BJ (cell line): ENCODE measurements at regions of chr4 and their contacts with region 1.

Region 1: GRCh38 chr4:3346146-3346545 is 53.3 kb downstream of the RGS12 start:
- DNase-seq: peak; percentile 35
- H3K4me3 ChIP-seq: no peak overlapping the region
- H3K27me3 ChIP-seq: no peaks in the 10 kb centered on the region
- CTCF ChIP-seq: peak; percentile 86

Region 2: GRCh38 chr4:3369781-3370674 is 23.9 kb after region 1 on chr4:
- CTCF ChIA-PET with region 1: interaction called, 10 read pairs
- POLR2A ChIA-PET with region 1: no interaction called
- DNase-seq: peak; percentile 85
- H3K4me3 ChIP-seq: peak overlapping the region; percentile 26
- H3K27me3 ChIP-seq: no peaks in the 10 kb centered on the region
- CTCF ChIP-seq: 0 out of 2 replicates have a peak, but pooled peaks have one; percentile 4